Astrocyte of the cerebellum (primary cell): ENCODE measurements at regions of chr1 and their contacts with region 1.

Region 1: GRCh38 chr1:28796352-28797211 is 15.4 kb upstream of the OPRD1 start:
- DNase-seq: no peak
- H3K4me3 ChIP-seq: no peak overlapping the region
- CTCF ChIP-seq: no peak

Region 2: GRCh38 chr1:28860332-28861073 is 63.9 kb after region 1 on chr1:
- in situ Hi-C with region 1: loop called (anchors 5 kb)
- DNase-seq: no peak
- H3K4me3 ChIP-seq: no peak overlapping the region
- CTCF ChIP-seq: no peak